ENCODE measurements at regions of chr1 and their contacts with region 1.

Region 1: GRCh38 chr1:181021811-181022434 is 747 bp downstream of the STX6 start:
- DNase-seq: peak; percentile 87
- H3K27ac ChIP-seq: peak overlapping the region; percentile 96
- CTCF ChIP-seq: no peak

Region 2: GRCh38 chr1:181033799-181034451 is 12.0 kb after region 1 on chr1 and contains the start of gene MR1:
- CTCF ChIA-PET with region 1: interaction called, 3 read pairs
- POLR2A ChIA-PET with region 1: interaction called, 10 read pairs
- DNase-seq: peak; percentile 82
- H3K27ac ChIP-seq: peak within 1 kb of the TSS; percentile 76
- CTCF ChIP-seq: no peak